Naive thymus-derived CD4-positive, alpha-beta T cell (primary cell): ENCODE measurements at regions of chr22 and their contacts with region 1.

Region 1: GRCh38 chr22:40728731-40729189 is 49.5 kb downstream of the MCHR1 start:
- DNase-seq: peak; percentile 29 to 87 (median 83)
- ATAC-seq: peak; percentile 75
- H3K4me3 ChIP-seq: peak overlapping the region; percentile 40
- H3K4me3 Mint-ChIP-seq: peak overlapping the region; percentile 61 to 81 (median 67)
- H3K27ac ChIP-seq: peak overlapping the region; percentile 80
- H3K27ac Mint-ChIP-seq: peak overlapping the region; percentile 86 to 99 (median 98)
- H3K4me1 ChIP-seq: peaks cover 42 to 62% of the 10 kb centered on the region in 2 donors
- H3K4me1 Mint-ChIP-seq: peaks cover 37 to 66% (median 54%) of the 10 kb centered on the region in 7 donors
- H3K27me3 ChIP-seq: no peaks in the 10 kb centered on the region
- H3K27me3 Mint-ChIP-seq: peaks cover 0 to under 1% (median 0%) of the 10 kb centered on the region in 5 donors

Region 2: GRCh38 chr22:40714192-40714951 is 14.4 kb before region 1 on chr22:
- CTCF ChIA-PET with region 1: interaction called, 4 read pairs
- POLR2A ChIA-PET with region 1: interaction called, 11 read pairs
- intact Hi-C with region 1: loop called (anchors 1 kb)
- DNase-seq: no peak
- ATAC-seq: no peak
- H3K4me3 ChIP-seq: no peak overlapping the region
- H3K4me3 Mint-ChIP-seq: peak overlapping the region in 9 of 10 donors; percentile 14 to 76 (median 62)
- H3K27ac ChIP-seq: no peak overlapping the region
- H3K27ac Mint-ChIP-seq: peak overlapping the region in 2 of 9 donors; percentile 31 to 46
- H3K4me1 ChIP-seq: peaks cover 0 to 5% of the 10 kb centered on the region in 2 donors
- H3K4me1 Mint-ChIP-seq: peaks cover 10 to 27% (median 21%) of the 10 kb centered on the region in 7 donors
- H3K27me3 ChIP-seq: no peaks in the 10 kb centered on the region
- H3K27me3 Mint-ChIP-seq: peaks cover 0 to 11% (median 0%) of the 10 kb centered on the region in 5 donors

Region 3: DNA sequence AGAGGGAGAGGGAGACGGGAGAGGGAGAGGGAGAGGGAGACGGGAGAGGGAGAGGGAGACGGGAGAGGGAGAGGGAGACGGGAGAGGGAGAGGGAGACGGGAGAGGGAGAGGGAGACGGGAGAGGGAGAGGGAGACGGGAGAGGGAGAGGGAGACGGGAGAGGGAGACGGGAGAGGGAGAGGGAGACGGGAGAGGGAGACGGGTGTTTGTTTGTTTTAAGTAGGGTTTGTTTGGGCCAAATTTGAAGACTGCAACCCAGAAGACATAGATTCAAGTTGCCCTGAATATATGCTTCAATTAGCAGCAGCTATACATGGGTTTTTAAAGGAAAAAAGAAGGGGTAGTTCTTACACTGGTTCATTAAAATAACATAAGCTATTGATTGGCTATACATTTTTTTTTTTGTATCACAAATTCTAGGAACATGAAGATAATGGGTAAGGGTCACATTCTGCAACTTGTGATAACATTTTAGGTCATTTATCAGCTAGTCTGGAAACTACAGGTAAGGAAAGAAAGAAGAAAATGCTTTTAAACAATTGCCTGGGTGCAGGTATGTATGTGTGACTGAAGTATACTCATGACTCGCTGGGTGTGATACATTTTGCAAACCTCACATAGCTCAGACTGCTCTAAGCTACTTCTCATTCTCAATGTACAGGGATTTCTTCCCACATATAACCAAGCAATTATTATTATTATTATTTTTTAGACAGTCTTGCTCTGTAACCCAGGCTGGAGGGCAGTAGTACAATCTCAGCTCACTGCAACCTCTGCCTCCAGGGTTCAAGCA is 17.9 kb after region 1 on chr22:
- CTCF ChIA-PET with region 1: no interaction called
- POLR2A ChIA-PET with region 1: no interaction called
- intact Hi-C with region 1: no loop called
- DNase-seq: no peak
- ATAC-seq: no peak
- H3K4me3 ChIP-seq: no peak overlapping the region
- H3K4me3 Mint-ChIP-seq: no peak overlapping the region
- H3K27ac ChIP-seq: no peak overlapping the region
- H3K27ac Mint-ChIP-seq: no peak overlapping the region
- H3K4me1 ChIP-seq: no peaks in the 10 kb centered on the region
- H3K4me1 Mint-ChIP-seq: peaks cover 0 to 10% (median 0%) of the 10 kb centered on the region in 7 donors
- H3K27me3 ChIP-seq: no peaks in the 10 kb centered on the region
- H3K27me3 Mint-ChIP-seq: peaks cover 0 to 9% (median 0%) of the 10 kb centered on the region in 5 donors

Region 4: DNA sequence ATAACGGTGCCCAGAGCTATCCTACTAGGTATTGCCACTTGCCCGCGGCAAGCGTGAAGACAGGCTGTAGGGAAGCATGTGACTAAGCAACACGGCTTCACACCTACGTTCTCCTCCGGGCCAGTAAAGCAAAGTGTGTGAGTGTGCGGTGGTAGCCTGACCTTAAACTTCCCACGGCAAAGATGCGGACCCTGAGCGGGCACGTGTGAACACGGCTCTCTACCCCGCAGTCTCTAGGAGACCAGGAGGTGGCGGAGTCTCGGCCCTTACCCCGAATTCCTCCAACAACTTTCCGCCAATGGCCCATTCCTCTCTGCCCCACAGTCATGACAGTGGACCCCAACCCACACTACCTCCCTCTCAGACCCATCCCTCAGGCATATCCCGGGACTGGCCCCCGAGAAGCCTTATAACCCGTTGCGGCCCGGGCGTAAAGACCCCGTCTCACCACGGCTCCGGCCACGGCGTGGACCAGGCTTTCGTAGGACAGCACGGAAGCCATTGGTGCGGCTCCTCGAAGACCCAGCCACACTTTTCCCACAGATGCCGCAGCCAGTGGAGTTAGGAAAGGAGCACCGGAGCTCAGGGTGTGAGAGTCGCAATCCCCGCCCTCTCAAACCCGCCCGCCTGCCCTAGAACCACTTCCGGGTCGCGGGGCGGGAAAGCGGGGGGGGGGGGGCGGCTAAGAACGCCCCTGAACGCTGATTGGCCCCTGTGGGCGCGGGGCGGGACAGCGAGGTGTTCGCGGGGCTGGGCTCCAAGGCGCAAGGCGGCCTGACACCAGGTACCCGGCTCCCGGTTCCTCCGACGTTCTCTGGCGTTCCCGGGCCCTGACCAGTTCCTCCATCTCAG is 90.2 kb after region 1 on chr22 and contains the start of gene SLC25A17:
- CTCF ChIA-PET with region 1: no interaction called
- POLR2A ChIA-PET with region 1: interaction called, 3 read pairs
- intact Hi-C with region 1: loop called in 1 of 2 experiments (anchors 2 kb)
- DNase-seq: peak; percentile 71 to 88 (median 82)
- ATAC-seq: peak; percentile 95
- H3K4me3 ChIP-seq: peak within 1 kb of the TSS; percentile 100
- H3K4me3 Mint-ChIP-seq: peak within 1 kb of the TSS; percentile 79 to 99 (median 93)
- H3K27ac ChIP-seq: peak within 1 kb of the TSS; percentile 86
- H3K27ac Mint-ChIP-seq: peak within 1 kb of the TSS; percentile 57 to 96 (median 88)
- H3K4me1 ChIP-seq: peaks cover 9 to 26% of the 10 kb centered on the region in 2 donors
- H3K4me1 Mint-ChIP-seq: peaks cover 22 to 42% (median 37%) of the 10 kb centered on the region in 7 donors
- H3K27me3 ChIP-seq: no peaks in the 10 kb centered on the region
- H3K27me3 Mint-ChIP-seq: no peaks in the 10 kb centered on the region
- total RNA-seq, gene SLC25A17: 6.8 to 22.1 (median 13.1) TPM